ENCODE measurements at regions of chr4 and their contacts with region 1.

Region 1: GRCh38 chr4:153142700-153143438 is 61.4 kb upstream of the TRIM2 start:
- DNase-seq: peak; percentile 75
- H3K4me3 Mint-ChIP-seq: no peak overlapping the region
- H3K27ac Mint-ChIP-seq: no peak overlapping the region
- H3K4me1 Mint-ChIP-seq: peaks cover 10% of the 10 kb centered on the region
- H3K27me3 Mint-ChIP-seq: no peaks in the 10 kb centered on the region

Region 2: DNA sequence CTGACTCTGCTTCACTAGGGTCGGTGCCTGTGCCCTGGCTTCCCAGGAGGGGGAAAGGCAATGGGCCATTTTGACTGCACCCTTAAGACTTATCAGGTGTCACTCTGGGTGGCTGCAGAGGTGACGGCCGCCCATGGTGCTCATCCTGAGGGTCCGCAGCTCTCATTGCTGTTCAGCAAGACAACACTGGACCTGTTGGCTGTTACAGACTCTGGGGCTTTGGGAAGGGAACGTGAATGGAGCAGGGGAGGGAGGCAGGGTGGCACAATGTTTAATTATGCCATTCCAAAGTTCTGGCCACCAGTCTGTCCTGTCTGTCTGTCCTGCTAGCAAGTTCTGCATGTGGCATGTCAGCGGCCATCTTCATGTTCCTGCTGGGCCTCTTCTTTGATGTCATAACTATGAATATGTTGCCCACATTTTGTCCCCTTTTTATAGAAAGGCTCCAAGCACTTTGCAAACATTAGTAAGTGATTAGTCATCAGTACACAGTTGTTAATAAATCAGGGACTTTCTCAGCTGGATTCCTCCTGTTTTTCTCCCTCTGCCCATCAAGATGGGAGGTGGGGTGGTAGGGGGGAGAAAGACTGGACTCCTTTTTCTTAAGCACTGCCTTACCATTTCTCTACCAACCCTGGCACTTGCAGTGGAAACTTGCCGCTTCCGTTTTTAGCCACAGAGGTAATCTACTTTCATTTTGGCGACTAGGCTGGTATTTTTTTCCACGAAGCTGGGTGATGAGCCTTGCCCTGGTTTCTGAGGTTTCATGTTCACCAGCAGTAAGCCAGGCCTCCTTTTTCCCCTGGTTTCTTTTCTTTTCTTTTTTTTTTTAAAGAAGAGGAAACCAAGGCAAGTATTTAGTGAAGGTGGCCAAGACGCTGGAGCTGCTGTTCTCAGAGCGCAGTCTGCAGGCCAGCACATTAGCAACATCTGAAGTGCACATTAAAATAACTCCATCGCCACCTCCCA is 27.3 kb before region 1 on chr4:
- CTCF ChIA-PET with region 1: no interaction called
- POLR2A ChIA-PET with region 1: no interaction called
- intact Hi-C with region 1: no loop called
- DNase-seq: peak; percentile 89
- H3K4me3 Mint-ChIP-seq: no peak overlapping the region
- H3K27ac Mint-ChIP-seq: no peak overlapping the region
- H3K4me1 Mint-ChIP-seq: peaks cover 17% of the 10 kb centered on the region
- H3K27me3 Mint-ChIP-seq: no peaks in the 10 kb centered on the region

Region 3: GRCh38 chr4:153159728-153160221 is 16.9 kb after region 1 on chr4:
- CTCF ChIA-PET with region 1: interaction called, 16 read pairs
- POLR2A ChIA-PET with region 1: no interaction called
- intact Hi-C with region 1: no loop called
- DNase-seq: no peak
- H3K4me3 Mint-ChIP-seq: peak overlapping the region; percentile 30
- H3K27ac Mint-ChIP-seq: peak overlapping the region; percentile 68
- H3K4me1 Mint-ChIP-seq: peaks cover 45% of the 10 kb centered on the region
- H3K27me3 Mint-ChIP-seq: peaks cover 5% of the 10 kb centered on the region

Region 4: DNA sequence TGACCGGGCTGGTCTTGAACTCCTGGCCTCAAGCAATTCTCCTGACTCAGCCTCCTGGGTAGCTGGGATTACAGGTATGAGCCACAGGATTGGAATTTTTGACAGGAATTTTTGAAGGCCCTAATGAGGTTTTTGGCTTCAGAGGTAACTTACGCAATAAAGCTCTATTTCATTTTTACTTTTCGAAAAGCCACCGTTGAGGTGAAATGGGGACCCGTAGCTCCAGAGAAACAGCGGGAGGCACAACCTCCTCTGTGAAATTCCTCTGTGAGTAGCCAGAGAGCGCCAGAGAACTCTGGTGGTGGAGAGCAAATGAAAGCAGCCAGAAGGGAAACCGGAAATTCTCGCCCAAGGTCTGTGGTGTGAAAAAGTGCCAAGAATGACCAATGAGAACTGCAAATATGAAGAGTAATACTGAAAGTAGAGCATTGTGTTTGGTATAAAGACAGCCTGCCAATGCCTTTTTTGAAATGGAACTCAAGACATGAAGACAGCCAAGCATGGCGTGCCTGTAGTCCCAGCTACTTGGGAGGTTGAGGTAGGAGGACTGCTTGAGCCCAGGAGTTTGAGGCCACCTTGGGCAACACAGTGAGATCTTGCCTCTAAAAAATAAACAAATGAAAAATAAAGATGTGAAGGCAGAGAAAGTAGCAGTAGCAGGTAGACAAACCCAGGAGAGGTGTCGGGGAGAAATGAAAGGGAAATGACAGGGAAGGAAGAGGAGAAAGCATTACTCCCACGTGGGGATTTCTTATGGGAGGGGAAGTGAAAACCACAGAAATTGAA is 290.3 kb after region 1 on chr4:
- CTCF ChIA-PET with region 1: interaction called, 3 read pairs
- POLR2A ChIA-PET with region 1: no interaction called
- intact Hi-C with region 1: loop called (anchors 5 kb)
- DNase-seq: peak; percentile 88
- H3K4me3 Mint-ChIP-seq: peak overlapping the region; percentile 77
- H3K27ac Mint-ChIP-seq: peak overlapping the region; percentile 74
- H3K4me1 Mint-ChIP-seq: peaks cover 52% of the 10 kb centered on the region
- H3K27me3 Mint-ChIP-seq: no peaks in the 10 kb centered on the region

Measured in activated CD4-positive, alpha-beta memory T cell treated with anti-CD3 and anti-CD28 coated beads for 36 hours (primary cell).